ENCODE measurements at regions of chr3 and their contacts with region 1.

Region 1: GRCh38 chr3:49802719-49803464 is at the start of gene INKA1:
- DNase-seq: peak; percentile 62 to 94
- H3K4me3 ChIP-seq: peak within 1 kb of the TSS; percentile 24 to 89 (median 78)
- H3K27ac ChIP-seq: no peak within 1 kb of the TSS
- H3K4me1 ChIP-seq: peaks cover 0 to 25% (median 21%) of the 10 kb centered on the region in 4 experiments; a peak in 6 of 7 replicates
- H3K27me3 ChIP-seq: peaks cover 0 to 18% (median 16%) of the 10 kb centered on the region in 4 experiments; a peak in 6 of 7 replicates
- CTCF ChIP-seq: peak in 2 of 3 experiments; percentile 89 to 94; a peak in 3 of 4 replicates
- EP300 ChIP-seq: no peak
- POLR2A ChIP-seq: no peak
- RAD21 ChIP-seq: peak; percentile 86 to 91
- total RNA-seq, gene INKA1: 1.3 and 1.8 TPM in 2 replicates

Region 2: GRCh38 chr3:49779358-49780079 is 23.4 kb before region 1 on chr3:
- CTCF ChIA-PET with region 1: no interaction called
- POLR2A ChIA-PET with region 1: no interaction called
- DNase-seq: no peak
- H3K4me3 ChIP-seq: no peak overlapping the region
- H3K27ac ChIP-seq: no peak overlapping the region
- H3K4me1 ChIP-seq: no peaks in the 10 kb centered on the region
- H3K27me3 ChIP-seq: no peaks in the 10 kb centered on the region
- CTCF ChIP-seq: no peak
- EP300 ChIP-seq: no peak
- POLR2A ChIP-seq: no peak
- RAD21 ChIP-seq: no peak

Region 3: DNA sequence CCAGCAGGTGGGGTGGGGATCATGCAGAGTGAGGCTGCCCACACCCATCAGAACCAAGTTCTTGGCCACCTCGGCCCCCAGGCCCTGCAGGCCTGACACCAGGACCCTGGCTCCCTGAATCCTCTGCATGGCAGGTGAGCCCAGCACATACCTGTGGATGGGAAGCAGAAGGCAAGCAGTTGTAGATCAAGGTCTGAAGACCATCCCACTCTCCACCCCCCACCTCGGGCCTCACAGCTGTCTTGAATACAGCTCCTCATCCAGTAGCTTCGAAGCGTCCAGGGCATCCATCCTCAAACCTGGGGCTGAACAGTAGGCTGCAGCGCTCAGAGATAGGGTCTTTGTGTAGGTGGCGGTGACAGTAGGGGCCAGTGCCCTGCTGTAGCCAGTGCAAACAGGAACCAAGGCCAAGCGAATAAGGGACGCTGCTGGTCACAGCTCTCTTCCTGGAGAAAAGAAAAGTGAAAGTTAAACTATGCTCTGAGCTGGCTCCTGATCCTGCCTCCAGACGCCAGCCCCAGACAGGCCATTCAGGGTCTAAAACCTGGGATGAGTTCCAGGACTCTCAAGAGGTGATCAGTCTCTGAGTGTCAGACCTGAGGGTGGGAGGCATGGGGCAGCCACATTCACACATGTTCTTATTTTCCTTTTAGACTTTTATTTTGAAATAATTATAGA is 10.7 kb after region 1 on chr3 and contains the start of gene UBA7:
- CTCF ChIA-PET with region 1: interaction called, 26 read pairs
- POLR2A ChIA-PET with region 1: interaction called, 16 read pairs
- DNase-seq: no peak
- H3K4me3 ChIP-seq: no peak within 1 kb of the TSS
- H3K27ac ChIP-seq: no peak within 1 kb of the TSS
- H3K4me1 ChIP-seq: no peaks in the 10 kb centered on the region
- H3K27me3 ChIP-seq: peaks cover 0 to 3% (median 0%) of the 10 kb centered on the region in 4 experiments; a peak in 1 of 7 replicates
- CTCF ChIP-seq: no peak
- EP300 ChIP-seq: no peak
- POLR2A ChIP-seq: no peak
- RAD21 ChIP-seq: no peak
- total RNA-seq, gene UBA7: 0.34 and 1.9 TPM in 2 replicates

Region 4: GRCh38 chr3:49831341-49831740 is 28.4 kb after region 1 on chr3:
- CTCF ChIA-PET with region 1: interaction called, 17 read pairs
- POLR2A ChIA-PET with region 1: interaction called, 5 read pairs
- DNase-seq: no peak
- H3K4me3 ChIP-seq: no peak overlapping the region
- H3K27ac ChIP-seq: no peak overlapping the region
- H3K4me1 ChIP-seq: no peaks in the 10 kb centered on the region
- H3K27me3 ChIP-seq: no peaks in the 10 kb centered on the region
- CTCF ChIP-seq: no peak
- EP300 ChIP-seq: no peak
- POLR2A ChIP-seq: no peak
- RAD21 ChIP-seq: no peak

Region 5: DNA sequence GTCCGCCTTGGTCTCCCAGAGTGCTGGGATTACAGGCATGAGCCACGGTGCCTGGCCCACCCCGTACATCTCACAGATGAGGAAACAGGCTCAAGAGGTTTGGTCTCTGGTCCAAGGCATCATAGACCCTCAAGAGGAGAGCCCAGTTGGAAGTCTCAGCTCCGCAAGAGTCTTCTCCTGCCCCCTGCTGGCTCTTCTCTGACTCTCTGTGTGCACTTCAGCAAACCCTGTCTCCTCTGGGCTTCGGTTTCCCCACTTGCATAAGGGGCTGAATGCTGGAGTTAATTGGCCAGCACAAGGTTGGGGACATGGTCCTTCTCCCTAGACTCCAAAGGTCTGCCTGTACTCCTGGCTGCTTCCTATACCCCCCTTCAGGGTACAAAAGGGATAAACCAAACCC is 96.9 kb after region 1 on chr3:
- CTCF ChIA-PET with region 1: interaction called, 28 read pairs
- POLR2A ChIA-PET with region 1: interaction called, 3 read pairs
- DNase-seq: peak in 1 of 2 experiments; percentile 64
- H3K4me3 ChIP-seq: no peak overlapping the region
- H3K27ac ChIP-seq: no peak overlapping the region
- H3K4me1 ChIP-seq: peaks cover 0 to 9% (median 8%) of the 10 kb centered on the region in 4 experiments; a peak in 6 of 7 replicates
- H3K27me3 ChIP-seq: peaks cover 0 to 3% (median 1%) of the 10 kb centered on the region in 4 experiments; a peak in 3 of 7 replicates
- CTCF ChIP-seq: peak in 2 of 3 experiments; percentile 73; a peak in 3 of 4 replicates
- EP300 ChIP-seq: no peak
- POLR2A ChIP-seq: no peak
- RAD21 ChIP-seq: peak; percentile 74 to 84

Region 6: GRCh38 chr3:49912881-49913281 is 110.0 kb after region 1 on chr3:
- CTCF ChIA-PET with region 1: interaction called, 15 read pairs
- POLR2A ChIA-PET with region 1: interaction called, 4 read pairs
- DNase-seq: no peak
- H3K4me3 ChIP-seq: no peak overlapping the region
- H3K27ac ChIP-seq: no peak overlapping the region
- H3K4me1 ChIP-seq: peaks cover 5 to 27% (median 16%) of the 10 kb centered on the region in 4 experiments
- H3K27me3 ChIP-seq: peaks cover 0 to 18% (median 14%) of the 10 kb centered on the region in 4 experiments; a peak in 5 of 7 replicates
- CTCF ChIP-seq: no peak
- EP300 ChIP-seq: no peak
- POLR2A ChIP-seq: no peak
- RAD21 ChIP-seq: no peak

Region 7: DNA sequence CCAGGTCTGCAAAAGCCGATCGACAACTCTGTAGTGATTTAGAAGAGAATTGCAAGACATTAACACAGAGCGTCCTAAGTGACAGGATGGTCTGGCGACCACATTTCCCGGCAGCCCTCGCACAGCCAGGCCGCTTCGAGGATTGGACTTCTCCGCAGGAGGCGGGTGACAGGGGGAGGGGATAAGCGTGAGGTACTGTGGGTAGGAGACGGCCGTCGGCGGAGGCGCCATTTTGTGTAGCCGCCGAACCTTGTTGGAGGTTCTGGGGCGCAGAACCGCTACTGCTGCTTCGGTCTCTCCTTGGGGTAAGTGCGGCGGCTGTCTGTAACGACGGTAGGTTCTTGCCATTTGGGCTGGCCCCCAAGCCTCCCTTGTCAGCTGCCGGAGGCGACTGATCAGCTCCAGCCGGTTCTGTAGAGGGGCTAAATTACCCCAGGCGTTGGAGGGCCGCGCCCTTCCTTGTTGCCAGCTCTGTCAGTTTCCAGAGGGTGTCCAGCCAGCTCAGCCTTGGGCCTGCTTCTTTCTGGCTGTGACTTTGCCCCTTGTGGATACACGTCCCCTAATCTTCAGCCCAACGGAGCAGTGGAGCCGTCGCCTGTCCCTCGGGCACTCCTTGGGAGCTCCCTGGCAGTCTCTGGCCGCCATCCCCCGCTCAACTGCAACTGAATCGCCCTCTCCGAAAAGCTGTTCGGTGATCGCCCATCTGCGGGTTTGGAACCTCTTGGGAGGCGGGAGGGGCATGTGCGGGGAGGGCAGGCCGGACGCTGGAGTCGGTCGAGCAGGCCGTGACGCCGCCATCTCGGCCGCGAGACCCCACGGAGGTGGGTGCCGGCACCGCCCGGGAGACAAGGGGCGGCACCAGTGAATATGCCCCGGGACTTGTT is 286.1 kb after region 1 on chr3 and contains the start of gene RBM5:
- CTCF ChIA-PET with region 1: no interaction called
- POLR2A ChIA-PET with region 1: no interaction called
- DNase-seq: peak; percentile 68 to 94
- H3K4me3 ChIP-seq: peak within 1 kb of the TSS; percentile 86 to 100 (median 100)
- H3K27ac ChIP-seq: peak within 1 kb of the TSS; percentile 87
- H3K4me1 ChIP-seq: peaks cover 0 to 3% (median 0%) of the 10 kb centered on the region in 4 experiments; a peak in 1 of 7 replicates
- H3K27me3 ChIP-seq: no peaks in the 10 kb centered on the region
- CTCF ChIP-seq: no peak
- EP300 ChIP-seq: no peak
- POLR2A ChIP-seq: peak in 1 of 2 experiments; percentile 78; a peak in 2 of 3 replicates
- RAD21 ChIP-seq: no peak
- total RNA-seq, gene RBM5: 82.7 and 83.7 TPM in 2 replicates